ENCODE measurements at regions of chr2 and their contacts with region 1.

Region 1: DNA sequence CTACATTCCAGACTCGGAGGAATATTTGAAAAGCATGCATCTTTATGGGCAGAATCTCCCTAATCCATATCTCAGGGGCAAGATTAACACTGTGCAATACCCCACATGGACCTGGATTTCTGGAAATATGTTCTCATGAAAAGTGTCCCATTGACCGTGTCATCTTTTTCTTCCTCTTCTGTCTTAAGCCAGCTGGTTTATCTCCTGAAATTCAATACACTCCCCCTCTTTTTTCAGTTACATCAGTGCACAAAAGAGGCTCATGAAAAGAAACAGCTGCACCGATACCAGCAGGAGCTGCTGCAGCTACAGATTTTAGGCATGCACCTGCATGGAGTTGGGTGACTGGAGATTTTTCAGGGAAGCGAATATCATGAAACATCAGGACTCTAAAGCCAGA is 117.2 kb downstream of the SLC4A3 start:
- DNase-seq: no peak
- ATAC-seq: no peak
- H3K4me3 ChIP-seq: no peak overlapping the region
- H3K27ac ChIP-seq: no peak overlapping the region
- H3K4me1 ChIP-seq: peaks cover 0 to 26% (median 9%) of the 10 kb centered on the region in 12 donors
- H3K27me3 ChIP-seq: no peaks in the 10 kb centered on the region
- CTCF ChIP-seq: peak in 2 of 12 donors; percentile 5 to 14
- POLR2A ChIP-seq: no peak

Region 2: GRCh38 chr2:219294356-219295351 is 449.9 kb before region 1 on chr2:
- intact Hi-C with region 1: no loop called
- DNase-seq: peak; percentile 83 to 93 (median 89)
- ATAC-seq: peak; percentile 48 to 92 (median 89)
- H3K4me3 ChIP-seq: peak overlapping the region; percentile 22 to 77 (median 64)
- H3K27ac ChIP-seq: peak overlapping the region; percentile 11 to 93 (median 78)
- H3K4me1 ChIP-seq: peaks cover 0 to 24% (median 11%) of the 10 kb centered on the region in 12 donors
- H3K27me3 ChIP-seq: peaks cover 0 to 8% (median 0%) of the 10 kb centered on the region in 9 donors
- CTCF ChIP-seq: peak in 11 of 12 donors; percentile 99 to 100 (median 100)
- POLR2A ChIP-seq: peak in 1 of 2 donors; percentile 66

Region 3: GRCh38 chr2:219997341-219997851 is 252.8 kb after region 1 on chr2:
- intact Hi-C with region 1: loop called in 2 of 10 experiments (anchors 5 to 10 kb)
- DNase-seq: peak in 3 of 5 donors; percentile 24 to 26 (median 25)
- ATAC-seq: peak in 1 of 4 donors; percentile 32
- H3K4me3 ChIP-seq: no peak overlapping the region
- H3K27ac ChIP-seq: no peak overlapping the region
- H3K4me1 ChIP-seq: peaks cover 0 to 3% (median 0%) of the 10 kb centered on the region in 12 donors
- H3K27me3 ChIP-seq: no peaks in the 10 kb centered on the region
- CTCF ChIP-seq: peak in 9 of 12 donors; percentile 12 to 47 (median 35)
- POLR2A ChIP-seq: no peak

Measured in heart left ventricle (tissue), 16 donors.